ENCODE measurements at regions of chr2 and their contacts with region 1.

Region 1: GRCh38 chr2:208040199-208041171 is 15.2 kb upstream of the PLEKHM3 start:
- H3K4me3 ChIP-seq: no peak overlapping the region
- H3K27ac ChIP-seq: no peak overlapping the region
- H3K4me1 ChIP-seq: no peaks in the 10 kb centered on the region
- CTCF ChIP-seq: peak; percentile 70

Region 2: GRCh38 chr2:207967121-207967520 is 73.4 kb before region 1 on chr2:
- CTCF ChIA-PET with region 1: interaction called, 27 read pairs
- POLR2A ChIA-PET with region 1: no interaction called
- H3K4me3 ChIP-seq: no peak overlapping the region
- H3K27ac ChIP-seq: no peak overlapping the region
- H3K4me1 ChIP-seq: peaks cover 18% of the 10 kb centered on the region
- CTCF ChIP-seq: no peak

Region 3: DNA sequence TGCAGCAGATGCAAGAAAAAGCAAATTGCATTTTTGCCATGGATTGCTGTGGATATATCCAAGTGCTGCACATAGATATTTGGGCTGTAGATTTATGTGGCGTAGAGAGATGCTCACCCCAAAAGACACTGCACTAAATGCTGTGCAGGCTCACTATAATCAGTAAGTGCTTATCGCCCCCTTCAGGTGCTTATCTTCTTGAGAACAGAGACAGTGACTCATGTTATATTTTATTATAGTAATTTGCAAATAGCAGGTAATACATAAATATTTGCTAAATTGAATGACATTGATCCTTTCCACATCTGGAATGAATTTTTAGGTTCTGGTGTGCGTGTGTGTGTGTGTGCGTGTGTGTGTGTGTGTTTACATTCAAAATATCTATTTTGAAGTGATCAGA is 21.6 kb after region 1 on chr2:
- CTCF ChIA-PET with region 1: interaction called, 27 read pairs
- POLR2A ChIA-PET with region 1: no interaction called
- H3K4me3 ChIP-seq: no peak overlapping the region
- H3K27ac ChIP-seq: no peak overlapping the region
- H3K4me1 ChIP-seq: no peaks in the 10 kb centered on the region
- CTCF ChIP-seq: no peak

Region 4: GRCh38 chr2:208072250-208072892 is 31.9 kb after region 1 on chr2:
- CTCF ChIA-PET with region 1: interaction called, 13 read pairs
- POLR2A ChIA-PET with region 1: no interaction called
- H3K4me3 ChIP-seq: no peak overlapping the region
- H3K27ac ChIP-seq: no peak overlapping the region
- H3K4me1 ChIP-seq: no peaks in the 10 kb centered on the region
- CTCF ChIP-seq: peak; percentile 76

Region 5: GRCh38 chr2:208306291-208306690 is 265.8 kb after region 1 on chr2:
- CTCF ChIA-PET with region 1: no interaction called
- POLR2A ChIA-PET with region 1: no interaction called
- H3K4me3 ChIP-seq: no peak overlapping the region
- H3K27ac ChIP-seq: no peak overlapping the region
- H3K4me1 ChIP-seq: no peaks in the 10 kb centered on the region
- CTCF ChIP-seq: no peak